Panc1 (cell line): ENCODE measurements at regions of chr4 and their contacts with region 1.

Region 1: DNA sequence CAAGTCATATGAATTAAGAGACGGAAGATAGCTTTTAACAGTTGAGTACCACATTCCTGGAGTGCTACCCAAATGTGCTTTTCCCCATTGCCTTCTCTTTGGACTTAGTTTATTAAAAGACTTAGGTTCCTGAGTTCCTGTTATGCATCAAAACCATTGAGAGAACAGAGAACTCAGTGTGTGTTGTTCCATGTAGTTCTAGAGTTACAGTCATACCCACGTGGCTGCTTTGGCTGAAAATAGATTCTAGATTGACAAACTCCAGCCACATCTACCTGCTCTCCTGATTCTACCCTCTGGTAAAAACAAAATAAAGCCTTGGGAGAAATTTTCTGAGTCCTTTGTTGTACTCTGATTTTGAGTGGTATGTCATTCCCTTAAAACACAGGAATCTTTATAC is 385.4 kb downstream of the IL15 start:
- DNase-seq: no peak
- ATAC-seq: no peak
- H3K4me3 ChIP-seq: no peak overlapping the region
- H3K27ac ChIP-seq: no peak overlapping the region
- H3K4me1 ChIP-seq: no peaks in the 10 kb centered on the region
- H3K27me3 ChIP-seq: no peaks in the 10 kb centered on the region
- CTCF ChIP-seq: no peak

Region 2: GRCh38 chr4:141977433-141977832 is 44.3 kb before region 1 on chr4:
- CTCF ChIA-PET with region 1: no interaction called
- POLR2A ChIA-PET with region 1: no interaction called
- in situ Hi-C with region 1: no loop called
- intact Hi-C with region 1: loop called (anchors 2 kb)
- DNase-seq: no peak
- ATAC-seq: no peak
- H3K4me3 ChIP-seq: no peak overlapping the region
- H3K27ac ChIP-seq: no peak overlapping the region
- H3K4me1 ChIP-seq: no peaks in the 10 kb centered on the region
- H3K27me3 ChIP-seq: no peaks in the 10 kb centered on the region
- CTCF ChIP-seq: no peak